ENCODE measurements at regions of chr4 and their contacts with region 1.

Region 1: DNA sequence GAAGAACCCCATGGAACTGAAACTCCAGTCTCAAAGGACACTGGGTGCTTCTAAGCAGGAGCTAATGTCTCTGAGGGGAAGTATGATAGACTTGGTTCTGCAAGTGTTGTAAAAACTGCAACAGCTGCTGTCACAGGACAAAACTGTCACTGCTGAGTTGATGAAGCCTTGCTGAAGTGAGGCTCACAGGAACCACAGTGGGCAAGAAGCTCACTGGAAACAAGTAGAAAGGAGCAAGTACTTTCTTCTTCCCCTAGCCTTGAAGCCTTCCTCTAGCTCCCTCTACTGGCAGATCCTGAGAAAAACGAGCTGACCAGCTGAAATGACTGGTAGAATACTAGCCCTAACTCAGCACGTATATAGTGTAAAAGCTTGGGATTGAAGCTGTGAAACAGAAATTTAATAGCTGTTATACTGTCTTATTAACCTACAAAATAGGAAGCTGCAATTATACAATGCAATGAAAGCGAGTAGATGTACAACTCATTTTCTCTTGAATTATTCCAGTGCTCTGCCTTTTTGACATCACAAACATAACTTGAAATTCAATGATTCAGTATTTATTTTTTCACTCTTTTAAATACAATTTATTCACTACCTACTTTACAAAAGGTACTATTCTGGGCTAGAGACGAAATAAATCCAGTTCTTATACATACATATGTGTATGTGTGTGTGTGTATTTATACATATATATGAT is 91.4 kb downstream of the GABRB1 start:
- DNase-seq: peak; percentile 71
- H3K4me3 ChIP-seq: no peak overlapping the region
- H3K27ac ChIP-seq: no peak overlapping the region
- H3K4me1 ChIP-seq: no peaks in the 10 kb centered on the region
- CTCF ChIP-seq: peak; percentile 97

Region 2: DNA sequence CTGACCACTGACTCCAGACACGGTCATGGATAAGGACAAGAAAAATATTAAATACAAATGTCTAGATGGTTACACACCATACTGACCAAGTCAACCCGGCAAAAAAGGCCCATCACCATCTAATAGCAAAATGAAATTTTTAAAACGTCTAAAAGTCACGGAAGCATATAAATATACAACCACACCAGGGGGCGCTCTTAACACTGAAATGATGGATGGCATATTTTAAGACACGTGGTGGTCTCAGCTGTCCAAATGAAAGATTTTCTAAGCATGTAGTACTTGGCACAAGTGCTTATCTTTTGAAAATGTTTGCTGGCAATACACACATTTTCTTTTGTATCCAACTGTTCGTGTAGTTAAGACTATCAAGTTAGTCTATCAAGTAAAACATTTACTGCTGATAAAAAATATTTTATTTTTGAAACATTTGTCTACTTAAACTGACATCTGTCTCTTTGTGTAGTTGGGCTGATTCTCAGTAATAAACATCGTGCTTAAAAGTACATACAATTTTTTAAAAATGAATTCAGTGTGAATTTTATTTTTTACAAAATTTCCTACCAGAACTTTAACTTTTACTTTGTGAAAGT is 278.3 kb before region 1 on chr4:
- CTCF ChIA-PET with region 1: no interaction called
- POLR2A ChIA-PET with region 1: no interaction called
- intact Hi-C with region 1: loop called (anchors 5 kb)
- DNase-seq: peak; percentile 62
- H3K4me3 ChIP-seq: no peak overlapping the region
- H3K27ac ChIP-seq: no peak overlapping the region
- H3K4me1 ChIP-seq: no peaks in the 10 kb centered on the region
- CTCF ChIP-seq: peak; percentile 93

Region 3: DNA sequence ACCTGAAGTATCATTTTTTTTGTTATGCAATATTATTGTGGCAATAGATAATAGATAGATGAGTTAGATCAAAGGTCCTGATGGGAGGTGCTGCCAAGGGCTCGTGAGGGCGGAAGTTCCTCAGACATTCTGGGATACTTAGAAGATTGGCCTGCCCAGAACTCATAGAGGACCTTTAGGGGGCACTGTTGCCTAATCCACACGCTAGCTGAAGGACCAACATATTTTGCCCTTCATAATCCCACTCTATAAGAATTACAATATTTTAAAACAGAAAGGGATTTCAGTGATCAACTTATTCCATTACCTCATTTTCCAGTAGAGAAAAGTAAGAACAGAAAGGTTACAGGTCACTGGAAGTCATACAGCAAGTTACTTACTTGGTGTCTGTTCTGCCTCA is 190.8 kb before region 1 on chr4:
- CTCF ChIA-PET with region 1: no interaction called
- POLR2A ChIA-PET with region 1: no interaction called
- intact Hi-C with region 1: loop called (anchors 5 kb)
- DNase-seq: peak; percentile 14
- H3K4me3 ChIP-seq: no peak overlapping the region
- H3K27ac ChIP-seq: no peak overlapping the region
- H3K4me1 ChIP-seq: no peaks in the 10 kb centered on the region
- CTCF ChIP-seq: peak; percentile 70

Measured in OCI-LY7 (cell line).